OCI-LY7 (cell line): ENCODE measurements at regions of chr17 and their contacts with region 1.

Region 1: GRCh38 chr17:47970704-47971463 is at the start of gene CDK5RAP3:
- DNase-seq: peak; percentile 100
- H3K4me3 ChIP-seq: peak within 1 kb of the TSS; percentile 83
- H3K27ac ChIP-seq: peak within 1 kb of the TSS; percentile 36
- H3K4me1 ChIP-seq: peaks cover 20% of the 10 kb centered on the region
- CTCF ChIP-seq: peak; percentile 85
- total RNA-seq, gene CDK5RAP3: 241 and 312 TPM in 2 replicates

Region 2: DNA sequence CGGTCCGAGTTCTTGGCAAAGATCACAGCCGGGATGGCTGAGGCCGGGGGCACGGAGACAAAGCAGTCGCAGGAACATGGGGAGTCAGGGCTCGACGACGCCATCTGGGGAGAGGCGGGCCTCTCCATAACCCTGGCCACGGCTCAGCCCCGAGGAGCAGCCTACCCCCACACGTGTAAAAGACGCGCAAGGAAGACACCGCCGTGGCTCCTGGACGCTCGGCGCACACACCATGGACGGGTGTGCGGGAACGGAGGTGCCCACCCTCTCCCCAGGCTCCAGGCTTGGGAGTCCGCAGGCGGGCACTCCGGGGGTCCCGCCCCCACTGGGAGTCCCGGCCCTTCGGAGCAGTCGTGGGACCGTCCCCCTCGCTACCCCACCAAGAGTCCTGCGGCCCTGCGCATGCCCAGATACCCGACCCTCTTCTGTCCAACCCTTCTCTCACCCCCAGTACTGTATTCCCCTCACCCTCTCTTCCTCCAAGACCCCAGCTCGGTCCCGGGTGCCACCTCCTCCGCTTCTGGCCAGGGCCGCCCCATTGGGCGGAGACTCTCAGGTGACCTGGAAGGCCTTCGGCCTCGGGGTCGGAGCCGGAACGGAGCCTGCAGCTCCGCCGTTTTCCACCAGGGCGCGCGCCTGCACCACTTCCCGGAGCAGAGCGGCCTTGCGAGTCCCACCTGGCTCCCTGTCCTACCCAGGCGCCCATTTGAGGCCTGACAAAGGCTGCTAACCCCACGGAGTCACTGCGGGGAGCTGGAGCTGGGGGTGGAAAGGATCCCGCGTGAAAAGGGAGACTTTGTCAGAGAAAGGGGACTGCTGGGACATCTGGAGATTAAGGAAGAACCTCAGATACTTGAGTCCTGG is 129.9 kb before region 1 on chr17 and contains the start of gene SCRN2:
- CTCF ChIA-PET with region 1: no interaction called
- POLR2A ChIA-PET with region 1: no interaction called
- intact Hi-C with region 1: loop called (anchors 5 kb)
- DNase-seq: peak; percentile 88
- H3K4me3 ChIP-seq: peak within 1 kb of the TSS; percentile 78
- H3K27ac ChIP-seq: no peak within 1 kb of the TSS
- H3K4me1 ChIP-seq: peaks cover 37% of the 10 kb centered on the region
- CTCF ChIP-seq: peak; percentile 88
- total RNA-seq, gene SCRN2: 33.9 and 42.9 TPM in 2 replicates

Region 3: DNA sequence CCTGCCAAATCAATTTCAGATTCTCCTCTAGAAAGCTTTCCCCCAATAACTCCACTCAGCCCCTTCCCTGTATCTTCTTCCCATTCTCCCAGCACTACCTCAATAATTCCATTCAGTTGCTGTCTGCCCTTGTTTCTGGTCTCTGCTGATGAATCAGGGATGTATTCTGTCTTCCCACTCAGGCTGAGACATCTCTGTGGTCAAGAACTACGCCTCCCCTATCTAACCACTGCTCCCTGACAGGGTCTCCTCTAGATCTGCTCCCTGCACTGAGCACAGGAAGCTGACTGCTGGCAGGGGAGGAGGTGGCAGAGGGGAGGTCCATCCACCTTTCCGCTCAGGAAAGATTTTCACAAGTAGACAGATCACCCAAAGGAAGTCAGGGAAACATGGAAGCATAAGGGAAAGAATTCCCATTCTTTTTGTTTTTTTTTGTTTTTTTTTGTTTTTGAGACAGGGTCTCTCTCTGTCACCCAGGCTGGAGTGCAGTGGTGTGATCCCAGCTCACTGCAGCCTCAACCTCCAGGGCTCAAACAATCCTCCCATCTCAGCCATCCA is 91.8 kb before region 1 on chr17:
- CTCF ChIA-PET with region 1: no interaction called
- POLR2A ChIA-PET with region 1: no interaction called
- intact Hi-C with region 1: no loop called
- DNase-seq: no peak
- H3K4me3 ChIP-seq: no peak overlapping the region
- H3K27ac ChIP-seq: no peak overlapping the region
- H3K4me1 ChIP-seq: no peaks in the 10 kb centered on the region
- CTCF ChIP-seq: no peak

Region 4: DNA sequence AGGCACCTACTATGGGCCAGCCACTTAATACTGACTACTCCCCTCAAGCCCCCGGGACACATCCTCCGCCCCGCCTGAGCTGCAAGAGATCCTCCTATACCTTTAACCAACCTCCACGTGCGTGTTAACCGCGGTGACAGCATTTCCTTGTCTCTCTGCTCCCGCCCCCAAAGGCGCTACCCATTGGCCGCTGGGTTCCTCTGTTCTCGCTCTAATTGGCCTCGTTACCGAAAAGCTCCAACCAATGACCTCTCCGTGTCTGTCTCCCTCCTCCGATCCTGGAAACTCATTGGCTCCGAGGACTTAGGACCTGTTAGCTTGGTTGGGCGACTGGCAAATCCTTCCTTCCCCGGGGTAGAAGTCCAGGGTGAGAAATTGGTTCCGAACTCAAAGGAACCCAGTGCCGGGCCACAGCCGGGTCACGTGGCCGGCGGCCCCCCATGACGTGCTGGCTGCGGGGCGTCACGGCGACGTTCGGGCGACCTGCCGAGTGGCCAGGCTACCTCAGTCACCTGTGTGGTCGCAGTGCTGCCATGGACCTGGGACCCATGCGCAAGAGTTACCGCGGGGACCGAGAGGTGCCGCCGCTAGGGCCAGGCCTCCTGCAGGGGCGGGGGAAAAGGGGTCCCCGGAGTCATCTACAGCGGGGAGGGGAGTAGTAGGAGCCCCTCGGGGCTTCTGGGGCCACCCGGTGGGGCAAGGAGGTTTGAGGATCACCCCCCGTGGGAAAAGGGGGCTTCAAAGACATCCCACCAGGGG is 29.5 kb before region 1 on chr17 and contains the start of gene PNPO:
- CTCF ChIA-PET with region 1: interaction called, 3 read pairs
- POLR2A ChIA-PET with region 1: interaction called, 4 read pairs
- intact Hi-C with region 1: loop called (anchors 2 kb)
- DNase-seq: peak; percentile 97
- H3K4me3 ChIP-seq: peak within 1 kb of the TSS; percentile 84
- H3K27ac ChIP-seq: peak within 1 kb of the TSS; percentile 41
- H3K4me1 ChIP-seq: peaks cover 44% of the 10 kb centered on the region
- CTCF ChIP-seq: peak; percentile 16; the same call in 1 of the 2 replicates
- total RNA-seq, gene PNPO: 14.0 and 14.7 TPM in 2 replicates

Region 5: GRCh38 chr17:47949136-47949759 is 21.6 kb before region 1 on chr17:
- CTCF ChIA-PET with region 1: interaction called, 3 read pairs
- POLR2A ChIA-PET with region 1: interaction called, 4 read pairs
- intact Hi-C with region 1: loop called (anchors 1 kb)
- DNase-seq: peak; percentile 82
- H3K4me3 ChIP-seq: peak overlapping the region; percentile 28
- H3K27ac ChIP-seq: peak overlapping the region; percentile 13
- H3K4me1 ChIP-seq: peaks cover 31% of the 10 kb centered on the region
- CTCF ChIP-seq: peak; percentile 95